ENCODE measurements at regions of chr12 and their contacts with region 1.

Region 1: DNA sequence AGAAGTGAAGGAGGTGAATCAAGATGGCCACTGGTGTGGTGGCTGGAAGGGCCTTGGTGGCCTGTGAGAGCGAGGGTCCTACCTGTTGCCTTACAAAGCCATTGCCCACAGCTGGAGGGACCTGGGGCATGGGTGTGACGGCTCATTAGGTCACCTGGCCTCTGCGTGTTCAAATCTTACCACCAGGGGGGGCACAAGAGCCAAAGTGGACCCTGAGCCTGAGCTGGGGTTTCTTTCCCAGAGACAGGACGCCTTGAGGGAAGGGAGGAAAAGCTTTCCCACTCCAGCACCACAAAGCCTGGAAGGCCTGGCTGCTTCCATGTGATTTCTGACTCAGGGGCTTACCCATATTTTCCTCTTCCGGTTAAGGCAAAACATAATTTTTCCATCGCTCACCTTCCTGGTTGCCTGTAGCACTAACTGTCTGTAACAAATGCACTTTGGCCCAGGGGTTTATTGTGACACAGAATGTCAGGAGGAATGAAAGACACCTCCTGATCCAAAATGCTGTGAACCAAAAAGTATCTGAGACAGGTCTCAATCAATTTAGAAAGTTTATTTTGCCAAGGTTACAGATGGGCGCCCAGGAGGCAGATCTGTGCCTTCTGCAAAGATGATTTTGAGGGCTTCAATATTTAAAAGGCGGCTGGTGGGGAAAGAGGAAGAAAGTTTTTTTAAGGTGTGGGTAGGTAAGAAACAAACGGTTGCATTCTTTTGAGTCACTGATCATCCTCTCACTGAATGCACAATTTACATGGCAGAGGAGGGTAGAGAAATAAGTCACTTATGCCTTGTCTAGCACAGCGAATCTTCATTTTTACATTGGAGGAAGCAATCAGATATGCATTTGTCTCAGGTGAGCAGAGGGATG is 4.3 kb upstream of the CD9 start:
- DNase-seq: peak; percentile 93
- H3K4me3 Mint-ChIP-seq: no peak overlapping the region
- H3K27ac Mint-ChIP-seq: peak overlapping the region; percentile 19
- H3K4me1 Mint-ChIP-seq: peaks cover 19% of the 10 kb centered on the region
- H3K27me3 Mint-ChIP-seq: peaks cover 34% of the 10 kb centered on the region

Region 2: DNA sequence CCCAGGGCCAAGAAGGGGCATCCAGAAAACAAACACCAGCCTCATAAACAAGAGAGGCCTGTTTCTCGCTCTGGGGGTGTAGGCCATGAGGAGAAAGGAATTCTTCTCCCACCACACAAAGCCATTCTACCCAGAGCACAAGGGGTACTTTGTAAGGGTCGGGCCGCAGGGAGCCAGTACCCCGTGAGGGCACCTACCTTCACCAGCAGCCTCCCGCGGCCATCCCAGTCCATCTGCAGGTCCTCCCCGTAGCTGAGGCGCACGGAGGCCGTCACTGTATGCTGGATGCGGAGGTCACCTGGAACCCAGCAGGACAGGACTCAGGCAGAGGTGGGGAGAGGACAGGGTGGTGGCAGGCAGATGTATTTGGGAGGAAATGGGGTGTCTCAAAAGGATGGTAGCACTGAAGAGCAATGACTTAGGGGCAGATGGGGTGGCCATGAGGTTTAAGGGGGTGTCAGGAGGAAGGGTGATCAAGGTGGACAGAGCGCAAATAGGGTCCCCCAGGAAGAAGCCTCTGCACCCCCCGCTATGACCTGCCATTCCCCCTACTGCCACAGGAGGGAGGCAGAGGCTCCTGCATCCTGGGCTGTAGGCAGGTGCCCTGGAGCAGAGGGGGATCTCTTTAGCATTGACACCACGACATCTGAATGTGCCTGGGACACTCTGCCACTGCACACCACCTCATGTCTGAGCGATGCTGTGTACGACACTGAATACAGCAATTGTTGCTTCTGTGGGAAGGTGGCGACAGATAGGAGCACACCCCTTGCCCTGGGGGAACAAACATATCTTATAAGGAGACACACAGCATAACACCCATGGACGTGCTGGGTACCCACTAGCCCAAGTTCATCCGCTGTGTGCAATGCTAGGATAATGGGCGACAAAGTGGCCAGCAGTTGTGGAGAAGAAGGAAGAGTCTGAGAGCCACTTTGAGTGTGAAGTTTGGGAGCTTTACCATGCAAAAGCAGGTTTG is 132.9 kb before region 1 on chr12:
- intact Hi-C with region 1: loop called (anchors 5 kb)
- DNase-seq: peak; percentile 88
- H3K4me3 Mint-ChIP-seq: no peak overlapping the region
- H3K27ac Mint-ChIP-seq: no peak overlapping the region
- H3K4me1 Mint-ChIP-seq: peaks cover 4% of the 10 kb centered on the region
- H3K27me3 Mint-ChIP-seq: peaks cover 8% of the 10 kb centered on the region

Region 3: GRCh38 chr12:6116175-6117021 is 79.5 kb before region 1 on chr12:
- intact Hi-C with region 1: no loop called
- DNase-seq: no peak
- H3K4me3 Mint-ChIP-seq: no peak overlapping the region
- H3K27ac Mint-ChIP-seq: no peak overlapping the region
- H3K4me1 Mint-ChIP-seq: no peaks in the 10 kb centered on the region
- H3K27me3 Mint-ChIP-seq: peaks cover 2% of the 10 kb centered on the region

Region 4: GRCh38 chr12:6167327-6168259 is 28.3 kb before region 1 on chr12:
- intact Hi-C with region 1: loop called (anchors 2 kb)
- DNase-seq: peak; percentile 82
- H3K4me3 Mint-ChIP-seq: peak overlapping the region; percentile 41
- H3K27ac Mint-ChIP-seq: peak overlapping the region; percentile 96
- H3K4me1 Mint-ChIP-seq: peaks cover 26% of the 10 kb centered on the region
- H3K27me3 Mint-ChIP-seq: no peaks in the 10 kb centered on the region

Region 5: DNA sequence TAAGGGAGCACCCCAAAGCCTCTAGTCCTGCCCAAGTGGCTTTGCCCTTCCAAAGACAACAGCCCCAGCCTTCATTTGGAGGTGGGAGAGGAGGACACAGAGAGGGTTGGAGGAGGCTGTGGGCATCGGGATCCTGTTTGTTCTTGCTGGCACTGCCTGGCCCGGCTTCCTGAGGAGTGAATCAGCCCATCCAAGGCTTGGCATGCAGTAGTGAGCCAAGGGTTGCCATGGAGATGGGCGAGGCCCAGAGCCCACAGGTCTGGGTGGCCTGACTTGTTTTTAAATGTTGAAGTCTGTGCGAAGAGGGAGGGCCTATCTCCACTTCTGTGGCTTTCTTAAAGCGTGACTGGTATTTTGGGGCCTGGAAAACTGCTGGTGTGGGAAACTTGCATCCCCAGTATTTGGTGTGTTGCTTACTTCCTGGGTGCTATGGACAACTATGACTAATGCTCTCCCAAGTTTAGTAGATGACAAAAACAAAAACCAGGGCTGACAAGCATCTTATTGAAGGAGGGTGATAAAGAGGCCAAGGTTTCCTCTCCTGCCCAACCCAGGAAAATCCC is 20.1 kb after region 1 on chr12:
- intact Hi-C with region 1: loop called (anchors 2 kb)
- DNase-seq: no peak
- H3K4me3 Mint-ChIP-seq: peak overlapping the region; percentile 20
- H3K27ac Mint-ChIP-seq: peak overlapping the region; percentile 84
- H3K4me1 Mint-ChIP-seq: peaks cover 50% of the 10 kb centered on the region
- H3K27me3 Mint-ChIP-seq: no peaks in the 10 kb centered on the region

Region 6: GRCh38 chr12:6230321-6231110 is 34.6 kb after region 1 on chr12:
- intact Hi-C with region 1: loop called (anchors 2 kb)
- DNase-seq: peak; percentile 93
- H3K4me3 Mint-ChIP-seq: peak overlapping the region; percentile 66
- H3K27ac Mint-ChIP-seq: peak overlapping the region; percentile 95
- H3K4me1 Mint-ChIP-seq: peaks cover 26% of the 10 kb centered on the region
- H3K27me3 Mint-ChIP-seq: peaks cover 1% of the 10 kb centered on the region

Region 7: DNA sequence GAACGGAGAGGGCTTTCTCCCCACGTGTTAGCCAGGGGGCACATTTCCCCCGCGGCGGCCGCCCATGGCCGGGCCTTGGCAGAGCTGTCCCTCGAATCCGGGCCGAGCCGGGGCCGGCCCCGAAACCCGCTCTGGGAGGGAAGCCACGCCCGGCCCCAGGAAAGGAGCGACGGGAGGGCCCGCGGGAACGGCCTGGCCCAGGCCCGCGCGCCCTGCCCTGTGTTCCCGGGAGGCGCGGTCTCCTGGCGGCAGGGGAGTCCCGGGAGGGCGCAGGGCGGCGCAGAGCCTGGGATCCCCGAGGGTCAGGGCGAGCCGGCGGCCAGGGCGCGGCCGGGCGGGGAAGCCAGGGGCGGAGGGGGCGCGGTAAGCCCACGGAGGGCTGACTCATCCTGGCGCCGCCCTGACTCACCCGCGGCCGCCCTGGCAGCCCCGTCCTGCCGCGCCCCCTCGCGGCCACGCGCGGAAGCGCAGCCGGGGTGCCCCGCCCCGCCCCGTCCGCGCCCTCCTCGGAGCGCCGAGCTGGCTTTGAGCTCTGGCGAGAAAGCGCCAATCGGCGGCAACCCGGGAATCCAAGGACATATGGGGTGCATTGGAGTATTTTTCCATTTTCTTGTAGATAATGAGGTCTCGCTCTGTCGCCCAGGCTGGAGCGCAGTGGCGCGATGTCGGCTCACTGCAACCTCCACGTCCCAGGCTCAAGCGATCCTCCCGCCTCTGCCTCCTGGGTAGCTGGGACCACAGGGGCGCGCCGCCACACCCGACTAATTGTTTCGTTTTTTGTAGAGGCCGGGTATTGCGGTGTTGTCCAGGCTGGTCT is 82.7 kb after region 1 on chr12:
- intact Hi-C with region 1: loop called (anchors 1 kb)
- DNase-seq: peak; percentile 97
- H3K4me3 Mint-ChIP-seq: peak overlapping the region; percentile 87
- H3K27ac Mint-ChIP-seq: peak overlapping the region; percentile 89
- H3K4me1 Mint-ChIP-seq: peaks cover 17% of the 10 kb centered on the region
- H3K27me3 Mint-ChIP-seq: peaks cover 41% of the 10 kb centered on the region

Region 8: DNA sequence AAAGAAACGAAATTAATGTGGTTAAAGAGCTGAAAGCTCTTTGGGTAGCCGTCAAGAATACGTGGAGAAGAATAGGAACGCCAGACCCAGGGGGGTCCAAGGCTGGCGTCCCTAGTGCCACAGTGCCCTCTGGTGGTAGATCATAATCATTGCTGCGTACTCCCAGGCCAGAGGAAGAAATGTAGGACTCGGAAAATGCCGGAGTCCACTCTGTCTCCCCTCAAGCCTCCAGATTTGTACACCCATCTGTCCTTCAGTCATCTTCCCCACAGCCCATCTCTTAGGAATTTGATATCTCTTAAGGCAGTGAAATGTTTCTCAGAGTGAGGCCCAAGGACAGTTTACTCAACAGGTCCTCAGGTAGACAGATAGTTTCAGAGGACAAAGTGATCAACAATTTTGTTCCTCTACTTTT is 89.2 kb after region 1 on chr12:
- intact Hi-C with region 1: loop called (anchors 1 kb)
- DNase-seq: peak; percentile 89
- H3K4me3 Mint-ChIP-seq: no peak overlapping the region
- H3K27ac Mint-ChIP-seq: peak overlapping the region; percentile 21
- H3K4me1 Mint-ChIP-seq: peaks cover under 1% of the 10 kb centered on the region
- H3K27me3 Mint-ChIP-seq: peaks cover 19% of the 10 kb centered on the region

Region 9: GRCh38 chr12:6335451-6336078 is 139.7 kb after region 1 on chr12:
- intact Hi-C with region 1: no loop called
- DNase-seq: peak; percentile 94
- H3K4me3 Mint-ChIP-seq: no peak overlapping the region
- H3K27ac Mint-ChIP-seq: no peak overlapping the region
- H3K4me1 Mint-ChIP-seq: peaks cover 41% of the 10 kb centered on the region
- H3K27me3 Mint-ChIP-seq: no peaks in the 10 kb centered on the region

Region 10: GRCh38 chr12:6470375-6471163 is 274.7 kb after region 1 on chr12 and contains the start of gene VAMP1:
- intact Hi-C with region 1: no loop called
- DNase-seq: peak; percentile 99
- H3K4me3 Mint-ChIP-seq: peak within 1 kb of the TSS; percentile 94
- H3K27ac Mint-ChIP-seq: peak within 1 kb of the TSS; percentile 91
- H3K4me1 Mint-ChIP-seq: peaks cover 52% of the 10 kb centered on the region
- H3K27me3 Mint-ChIP-seq: peaks cover 1% of the 10 kb centered on the region
- total RNA-seq, gene VAMP1: 50.0 and 51.2 TPM in 2 replicates